ENCODE measurements at regions of chr19 and their contacts with region 1.

Region 1: GRCh38 chr19:48646001-48646721 is at the start of gene CA11:
- H3K4me3 Mint-ChIP-seq: peak within 1 kb of the TSS; percentile 71
- H3K27ac Mint-ChIP-seq: peak within 1 kb of the TSS; percentile 73
- H3K4me1 Mint-ChIP-seq: peaks cover 50% of the 10 kb centered on the region
- H3K27me3 Mint-ChIP-seq: no peaks in the 10 kb centered on the region

Region 2: GRCh38 chr19:48780631-48781391 is 134.7 kb after region 1 on chr19:
- intact Hi-C with region 1: loop called (anchors 10 kb)
- H3K4me3 Mint-ChIP-seq: peak overlapping the region; percentile 20
- H3K27ac Mint-ChIP-seq: peak overlapping the region; percentile 89
- H3K4me1 Mint-ChIP-seq: peaks cover 34% of the 10 kb centered on the region
- H3K27me3 Mint-ChIP-seq: peaks cover 10% of the 10 kb centered on the region

Region 3: DNA sequence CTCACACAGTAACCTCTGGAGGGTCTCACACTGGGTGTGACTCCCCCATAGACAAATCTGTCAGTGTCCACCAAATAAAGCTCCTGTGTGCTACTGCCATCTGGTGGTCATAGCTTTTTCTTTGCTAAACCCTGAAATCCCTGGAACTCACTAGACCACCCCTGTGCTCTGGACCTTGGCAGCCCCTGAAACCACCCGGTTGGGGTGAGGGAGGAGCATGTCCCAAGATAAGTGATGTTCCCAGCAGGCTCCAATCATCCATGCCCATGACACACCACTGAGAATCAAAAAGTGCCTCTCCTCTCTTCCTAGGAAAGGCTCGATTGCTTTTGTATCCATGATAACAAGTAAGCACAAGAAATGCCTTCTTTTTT is 196.6 kb after region 1 on chr19:
- intact Hi-C with region 1: loop called (anchors 2 kb)
- H3K4me3 Mint-ChIP-seq: no peak overlapping the region
- H3K27ac Mint-ChIP-seq: no peak overlapping the region
- H3K4me1 Mint-ChIP-seq: peaks cover 6% of the 10 kb centered on the region
- H3K27me3 Mint-ChIP-seq: peaks cover 2% of the 10 kb centered on the region

Region 4: DNA sequence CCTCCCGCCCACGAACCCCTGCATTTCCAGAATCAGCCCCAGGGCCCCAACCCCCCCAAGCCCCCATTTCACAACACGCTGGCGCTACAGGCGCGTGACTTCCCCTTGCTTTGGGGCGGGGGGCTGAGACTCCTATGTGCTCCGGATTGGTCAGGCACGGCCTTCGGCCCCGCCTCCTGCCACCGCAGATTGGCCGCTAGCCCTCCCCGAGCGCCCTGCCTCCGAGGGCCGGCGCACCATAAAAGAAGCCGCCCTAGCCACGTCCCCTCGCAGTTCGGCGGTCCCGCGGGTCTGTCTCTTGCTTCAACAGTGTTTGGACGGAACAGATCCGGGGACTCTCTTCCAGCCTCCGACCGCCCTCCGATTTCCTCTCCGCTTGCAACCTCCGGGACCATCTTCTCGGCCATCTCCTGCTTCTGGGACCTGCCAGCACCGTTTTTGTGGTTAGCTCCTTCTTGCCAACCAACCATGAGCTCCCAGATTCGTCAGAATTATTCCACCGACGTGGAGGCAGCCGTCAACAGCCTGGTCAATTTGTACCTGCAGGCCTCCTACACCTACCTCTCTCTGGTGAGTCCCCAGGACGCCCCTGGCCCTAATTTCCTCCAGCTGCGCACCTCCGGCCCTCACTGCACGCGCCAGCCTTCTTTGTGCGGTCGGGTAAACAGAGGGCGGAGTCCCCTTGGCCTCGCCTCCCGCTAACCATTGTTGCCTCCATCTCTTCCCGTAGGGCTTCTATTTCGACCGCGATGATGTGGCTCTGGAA is 319.1 kb after region 1 on chr19 and contains the start of gene FTL:
- intact Hi-C with region 1: loop called (anchors 5 kb)
- H3K4me3 Mint-ChIP-seq: peak within 1 kb of the TSS; percentile 100
- H3K27ac Mint-ChIP-seq: peak within 1 kb of the TSS; percentile 98
- H3K4me1 Mint-ChIP-seq: peaks cover 72% of the 10 kb centered on the region
- H3K27me3 Mint-ChIP-seq: no peaks in the 10 kb centered on the region

Measured in dendritic cell treated with granulocyte-macrophage colony-stimulating factor and Interleukin-4, amounts not matched to agents 40 ng/mL and 50 ng/mL, for 4 days (primary cell).